Right cardiac atrium (tissue), 5 donors: ENCODE measurements at regions of chr14 and their contacts with region 1.

Region 1: DNA sequence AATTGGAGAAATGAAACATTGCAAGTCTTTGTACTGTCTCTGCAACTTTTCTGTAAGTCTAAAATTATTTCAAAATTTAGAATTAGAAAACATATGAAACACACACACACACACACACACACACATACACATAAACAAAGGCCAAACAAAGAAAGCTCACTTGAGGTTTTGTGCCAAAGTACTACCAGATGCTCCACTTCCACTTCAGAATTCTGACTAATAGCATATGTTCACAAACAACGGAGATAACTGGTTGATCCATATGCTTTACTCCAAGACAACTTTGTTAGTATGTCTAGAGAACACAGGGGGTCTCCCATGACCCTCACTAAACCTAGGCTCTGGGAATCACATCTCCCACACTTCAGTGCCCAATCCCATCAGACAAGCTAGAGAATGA is 133.8 kb upstream of the CLEC14A start:
- DNase-seq: no peak
- ATAC-seq: no peak
- H3K4me3 ChIP-seq: no peak overlapping the region
- H3K27ac ChIP-seq: no peak overlapping the region
- H3K4me1 ChIP-seq: no peaks in the 10 kb centered on the region
- H3K27me3 ChIP-seq: no peaks in the 10 kb centered on the region

Region 2: GRCh38 chr14:39368261-39368959 is 978.7 kb after region 1 on chr14:
- intact Hi-C with region 1: loop called in 1 of 4 experiments (anchors 10 kb)
- DNase-seq: peak in 2 of 3 donors; percentile 23 to 53
- ATAC-seq: peak; percentile 67 to 74
- H3K4me3 ChIP-seq: no peak overlapping the region
- H3K27ac ChIP-seq: no peak overlapping the region
- H3K4me1 ChIP-seq: peaks cover 5% of the 10 kb centered on the region
- H3K27me3 ChIP-seq: no peaks in the 10 kb centered on the region